ENCODE measurements at regions of chr5 and their contacts with region 1.

Region 1: GRCh38 chr5:149834246-149834855 is 104.2 kb downstream of the PPARGC1B start:
- DNase-seq: peak; percentile 87
- H3K4me3 Mint-ChIP-seq: no peak overlapping the region
- H3K27ac Mint-ChIP-seq: peak overlapping the region; percentile 42
- H3K4me1 Mint-ChIP-seq: peaks cover 17% of the 10 kb centered on the region
- H3K27me3 Mint-ChIP-seq: no peaks in the 10 kb centered on the region
- CTCF ChIP-seq: peak; percentile 92

Region 2: GRCh38 chr5:149799119-149799623 is 35.2 kb before region 1 on chr5:
- CTCF ChIA-PET with region 1: interaction called, 20 read pairs
- POLR2A ChIA-PET with region 1: interaction called, 4 read pairs
- intact Hi-C with region 1: no loop called
- DNase-seq: peak; percentile 93
- H3K4me3 Mint-ChIP-seq: peak overlapping the region; percentile 12
- H3K27ac Mint-ChIP-seq: peak overlapping the region; percentile 43
- H3K4me1 Mint-ChIP-seq: peaks cover 38% of the 10 kb centered on the region
- H3K27me3 Mint-ChIP-seq: no peaks in the 10 kb centered on the region
- CTCF ChIP-seq: no peak

Region 3: GRCh38 chr5:149860801-149861322 is 26.5 kb after region 1 on chr5:
- CTCF ChIA-PET with region 1: interaction called, 845 read pairs
- POLR2A ChIA-PET with region 1: interaction called, 29 read pairs
- intact Hi-C with region 1: loop called (anchors 1 kb)
- DNase-seq: peak; percentile 94
- H3K4me3 Mint-ChIP-seq: no peak overlapping the region
- H3K27ac Mint-ChIP-seq: peak overlapping the region; percentile 21
- H3K4me1 Mint-ChIP-seq: peaks cover 38% of the 10 kb centered on the region
- H3K27me3 Mint-ChIP-seq: no peaks in the 10 kb centered on the region
- CTCF ChIP-seq: no peak

Region 4: GRCh38 chr5:149913436-149914419 is 79.4 kb after region 1 on chr5:
- CTCF ChIA-PET with region 1: interaction called, 13 read pairs
- POLR2A ChIA-PET with region 1: interaction called, 9 read pairs
- intact Hi-C with region 1: no loop called
- DNase-seq: no peak
- H3K4me3 Mint-ChIP-seq: no peak overlapping the region
- H3K27ac Mint-ChIP-seq: no peak overlapping the region
- H3K4me1 Mint-ChIP-seq: peaks cover 57% of the 10 kb centered on the region
- H3K27me3 Mint-ChIP-seq: no peaks in the 10 kb centered on the region
- CTCF ChIP-seq: no peak

Region 5: GRCh38 chr5:149979896-149980295 is 145.5 kb after region 1 on chr5:
- CTCF ChIA-PET with region 1: interaction called, 15 read pairs
- POLR2A ChIA-PET with region 1: interaction called, 4 read pairs
- intact Hi-C with region 1: no loop called
- DNase-seq: no peak
- H3K4me3 Mint-ChIP-seq: no peak overlapping the region
- H3K27ac Mint-ChIP-seq: no peak overlapping the region
- H3K4me1 Mint-ChIP-seq: peaks cover 22% of the 10 kb centered on the region
- H3K27me3 Mint-ChIP-seq: no peaks in the 10 kb centered on the region
- CTCF ChIP-seq: no peak

Region 6: DNA sequence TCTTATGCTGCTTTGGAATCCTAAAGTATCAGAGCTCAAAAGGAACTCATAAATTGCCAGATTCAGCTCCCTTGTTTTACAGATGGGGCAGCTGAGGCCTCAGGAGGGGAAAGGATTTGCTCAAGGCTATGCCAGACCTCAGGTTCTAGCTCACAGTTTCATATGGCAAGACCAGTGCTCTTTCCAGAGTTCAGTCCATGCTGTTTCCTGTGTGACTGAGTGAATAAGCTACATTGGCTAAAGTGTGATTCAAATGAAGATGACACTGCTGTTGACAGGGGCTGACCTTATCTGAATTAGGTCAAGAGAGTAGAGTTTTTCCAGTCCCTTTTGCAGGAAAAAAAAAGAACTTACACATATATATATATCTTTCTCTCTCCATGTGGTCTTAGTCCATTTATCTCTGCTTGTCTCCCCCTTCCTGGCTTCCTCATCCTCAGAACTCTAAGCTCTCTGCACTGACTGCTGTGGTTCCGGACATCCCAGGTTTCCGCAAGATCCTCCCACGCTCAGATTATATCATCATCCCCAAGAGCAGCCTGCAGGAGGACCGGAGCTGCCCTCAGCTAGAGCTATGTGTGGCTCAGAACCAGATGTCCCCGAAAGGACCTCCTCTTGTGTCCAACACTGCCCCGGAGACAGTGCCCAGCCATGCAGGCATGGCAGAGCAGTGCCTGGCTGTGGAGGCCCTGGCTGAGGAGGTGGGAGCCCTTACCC is 175.5 kb after region 1 on chr5:
- CTCF ChIA-PET with region 1: interaction called, 10 read pairs
- POLR2A ChIA-PET with region 1: no interaction called
- intact Hi-C with region 1: no loop called
- DNase-seq: no peak
- H3K4me3 Mint-ChIP-seq: no peak overlapping the region
- H3K27ac Mint-ChIP-seq: peak overlapping the region; percentile 25
- H3K4me1 Mint-ChIP-seq: no peaks in the 10 kb centered on the region
- H3K27me3 Mint-ChIP-seq: no peaks in the 10 kb centered on the region
- CTCF ChIP-seq: no peak

Region 7: DNA sequence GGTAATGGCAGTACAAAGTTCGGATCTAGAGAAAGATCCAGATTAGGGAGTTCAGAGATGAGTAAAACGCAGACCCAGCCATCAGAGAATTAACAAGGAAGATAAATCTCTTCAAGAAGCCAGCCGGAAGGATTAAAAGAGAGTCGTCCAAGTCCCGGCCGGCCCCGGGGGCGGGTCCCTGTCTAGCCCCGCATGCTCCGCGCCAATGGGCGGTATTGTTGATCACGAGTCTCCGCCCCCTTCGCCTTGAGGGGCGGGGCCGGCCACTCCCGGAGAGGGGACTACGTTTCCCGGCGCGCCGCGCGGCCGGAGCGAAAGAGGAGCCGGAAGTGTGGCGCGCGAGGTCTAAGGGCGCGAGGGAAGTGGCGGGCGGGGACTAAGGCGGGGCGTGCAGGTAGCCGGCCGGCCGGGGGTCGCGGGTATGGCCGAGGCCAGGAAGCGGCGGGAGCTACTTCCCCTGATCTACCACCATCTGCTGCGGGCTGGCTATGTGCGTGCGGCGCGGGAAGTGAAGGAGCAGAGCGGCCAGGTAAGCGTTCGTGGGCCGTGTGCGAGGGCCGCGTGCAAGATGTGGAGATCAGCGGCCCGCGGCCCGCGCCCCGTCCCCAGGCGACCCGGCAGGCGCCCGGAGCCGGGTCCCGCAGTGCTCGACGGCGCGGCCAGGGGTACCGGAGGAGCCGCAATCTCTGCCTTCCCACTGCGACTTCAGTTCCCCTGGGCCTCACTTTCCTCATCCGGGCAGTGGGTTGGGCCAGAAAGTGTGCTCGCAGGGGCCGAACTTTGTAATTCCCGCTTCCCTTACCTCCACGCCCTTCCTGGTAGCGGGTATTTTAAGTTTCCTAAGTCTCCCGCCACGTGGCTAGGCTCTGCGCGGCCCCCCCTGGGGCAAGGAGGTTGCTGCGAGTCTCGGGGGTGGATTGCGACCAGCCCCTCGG is 523.2 kb after region 1 on chr5 and contains the start of gene TCOF1:
- CTCF ChIA-PET with region 1: interaction called, 4 read pairs
- POLR2A ChIA-PET with region 1: no interaction called
- intact Hi-C with region 1: loop called (anchors 10 kb)
- DNase-seq: peak; percentile 99
- H3K4me3 Mint-ChIP-seq: peak within 1 kb of the TSS; percentile 81
- H3K27ac Mint-ChIP-seq: peak within 1 kb of the TSS; percentile 72
- H3K4me1 Mint-ChIP-seq: peaks cover 16% of the 10 kb centered on the region
- H3K27me3 Mint-ChIP-seq: no peaks in the 10 kb centered on the region
- CTCF ChIP-seq: no peak
- total RNA-seq, gene TCOF1: 68.4 and 83.5 TPM in 2 replicates